ENCODE measurements at regions of chr14 and their contacts with region 1.

Region 1: GRCh38 chr14:69611201-69612011 is at the start of gene SUSD6:
- DNase-seq: peak; percentile 95
- ATAC-seq: peak; percentile 87
- total RNA-seq, gene SUSD6: 21.4 TPM

Region 2: GRCh38 chr14:69666690-69667239 is 55.4 kb after region 1 on chr14:
- intact Hi-C with region 1: loop called (anchors 10 kb)
- DNase-seq: no peak
- ATAC-seq: no peak

Region 3: GRCh38 chr14:69720912-69721311 is 109.5 kb after region 1 on chr14:
- intact Hi-C with region 1: loop called (anchors 5 kb)
- DNase-seq: no peak
- ATAC-seq: no peak